Psoas muscle (tissue), 8 donors: ENCODE measurements at regions of chr4 and their contacts with region 1.

Region 1: DNA sequence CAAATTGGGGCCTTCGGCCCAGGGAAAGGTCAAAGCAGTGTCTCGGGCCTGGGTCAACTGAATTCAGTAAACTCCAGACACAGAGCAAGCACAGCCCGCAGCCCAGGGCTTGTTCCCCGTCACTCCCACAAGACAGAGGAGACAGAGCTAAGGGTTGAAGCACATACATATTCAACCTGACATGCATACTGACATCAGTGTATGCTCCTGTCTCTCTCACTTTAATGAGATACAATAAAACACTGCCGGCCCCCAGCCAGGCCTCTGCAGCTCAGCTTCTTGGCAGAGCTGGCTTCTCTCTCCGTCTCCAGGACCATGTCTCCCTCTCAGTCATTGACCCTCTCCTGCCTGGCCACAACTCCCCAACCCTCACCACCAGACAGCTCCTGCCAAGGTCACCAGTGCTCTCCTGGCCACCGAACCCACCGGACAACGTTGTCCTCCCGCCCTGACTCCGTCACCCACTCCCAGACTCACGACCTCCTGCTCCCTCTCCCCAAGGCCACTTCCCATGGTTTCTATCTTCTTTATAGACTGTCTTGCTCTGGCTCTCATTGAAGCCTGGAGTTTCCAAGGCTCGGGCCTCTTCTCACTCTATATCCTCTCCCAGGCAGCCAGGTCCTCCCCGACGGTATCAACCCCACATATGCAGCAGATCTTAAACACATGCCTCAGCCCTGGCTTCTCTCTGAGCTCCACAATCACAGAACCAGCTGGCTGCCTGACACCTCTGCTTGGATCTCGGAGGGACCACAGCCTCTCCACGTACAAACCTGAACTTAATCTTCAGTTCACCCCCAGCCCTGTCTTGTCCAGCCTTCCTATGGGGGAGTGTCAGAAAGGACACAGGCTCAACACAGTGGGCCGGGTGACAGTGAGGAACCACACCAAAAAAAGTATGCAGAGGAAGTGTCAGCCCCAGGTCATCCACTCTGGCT is 67.7 kb upstream of the C4orf50 start:
- DNase-seq: no peak
- ATAC-seq: no peak
- H3K4me3 ChIP-seq: no peak overlapping the region
- H3K27ac ChIP-seq: no peak overlapping the region
- H3K4me1 ChIP-seq: no peaks in the 10 kb centered on the region
- H3K27me3 ChIP-seq: peaks cover 0 to 2% (median 0%) of the 10 kb centered on the region in 3 donors
- CTCF ChIP-seq: no peak

Region 2: GRCh38 chr4:5998333-5998936 is 87.5 kb before region 1 on chr4:
- intact Hi-C with region 1: loop called in 1 of 2 experiments (anchors 1 kb)
- DNase-seq: peak; percentile 25 to 41
- ATAC-seq: peak in 3 of 4 donors; percentile 54 to 65 (median 60)
- H3K4me3 ChIP-seq: no peak overlapping the region
- H3K27ac ChIP-seq: no peak overlapping the region
- H3K4me1 ChIP-seq: no peaks in the 10 kb centered on the region
- H3K27me3 ChIP-seq: peaks cover 0 to 10% (median 2%) of the 10 kb centered on the region in 3 donors
- CTCF ChIP-seq: peak; percentile 68

Region 3: GRCh38 chr4:6298035-6298434 is 212.1 kb after region 1 on chr4:
- intact Hi-C with region 1: no loop called
- DNase-seq: no peak
- ATAC-seq: no peak
- H3K4me3 ChIP-seq: no peak overlapping the region
- H3K27ac ChIP-seq: no peak overlapping the region
- H3K4me1 ChIP-seq: no peaks in the 10 kb centered on the region
- H3K27me3 ChIP-seq: no peaks in the 10 kb centered on the region
- CTCF ChIP-seq: no peak